OCI-LY7 (cell line): ENCODE measurements at regions of chr22 and their contacts with region 1.

Region 1: GRCh38 chr22:50376085-50376651 is 33.0 kb downstream of the PPP6R2 start:
- DNase-seq: no peak
- H3K4me3 ChIP-seq: no peak overlapping the region
- H3K27ac ChIP-seq: no peak overlapping the region
- H3K4me1 ChIP-seq: no peaks in the 10 kb centered on the region
- CTCF ChIP-seq: no peak

Region 2: GRCh38 chr22:50058906-50059880 is 317.0 kb before region 1 on chr22:
- CTCF ChIA-PET with region 1: no interaction called
- POLR2A ChIA-PET with region 1: no interaction called
- intact Hi-C with region 1: no loop called
- DNase-seq: peak; percentile 28
- H3K4me3 ChIP-seq: no peak overlapping the region
- H3K27ac ChIP-seq: no peak overlapping the region
- H3K4me1 ChIP-seq: peaks cover 64% of the 10 kb centered on the region
- CTCF ChIP-seq: peak; percentile 33; the same call in 1 of the 2 replicates

Region 3: DNA sequence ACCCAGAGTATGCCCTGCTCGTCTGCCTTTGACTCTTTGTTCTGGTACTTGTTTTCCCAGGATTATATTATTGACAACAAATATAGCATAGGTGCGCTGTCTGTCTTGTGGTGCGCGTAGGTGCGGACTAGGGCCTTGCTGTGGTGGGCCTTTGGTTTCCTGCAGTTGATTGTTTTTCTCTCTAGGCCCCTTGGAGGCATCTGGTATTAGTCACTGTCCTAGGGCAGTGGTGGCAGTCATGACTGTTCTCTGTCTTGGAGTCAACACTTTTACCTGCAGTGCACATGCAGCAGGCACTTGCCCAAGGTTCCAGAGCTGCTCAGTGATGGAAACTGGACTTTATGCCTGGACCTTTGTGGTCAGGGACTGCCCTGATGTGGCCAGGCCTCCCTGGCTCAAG is 14.5 kb before region 1 on chr22:
- CTCF ChIA-PET with region 1: no interaction called
- POLR2A ChIA-PET with region 1: interaction called, 13 read pairs
- intact Hi-C with region 1: no loop called
- DNase-seq: no peak
- H3K4me3 ChIP-seq: no peak overlapping the region
- H3K27ac ChIP-seq: no peak overlapping the region
- H3K4me1 ChIP-seq: no peaks in the 10 kb centered on the region
- CTCF ChIP-seq: no peak